Posterior vena cava (tissue), 2 donors: ENCODE measurements at regions of chr1 and their contacts with region 1.

Region 1: GRCh38 chr1:210663730-210664573 is 335.2 kb downstream of the HHAT start:
- DNase-seq: no peak

Region 2: DNA sequence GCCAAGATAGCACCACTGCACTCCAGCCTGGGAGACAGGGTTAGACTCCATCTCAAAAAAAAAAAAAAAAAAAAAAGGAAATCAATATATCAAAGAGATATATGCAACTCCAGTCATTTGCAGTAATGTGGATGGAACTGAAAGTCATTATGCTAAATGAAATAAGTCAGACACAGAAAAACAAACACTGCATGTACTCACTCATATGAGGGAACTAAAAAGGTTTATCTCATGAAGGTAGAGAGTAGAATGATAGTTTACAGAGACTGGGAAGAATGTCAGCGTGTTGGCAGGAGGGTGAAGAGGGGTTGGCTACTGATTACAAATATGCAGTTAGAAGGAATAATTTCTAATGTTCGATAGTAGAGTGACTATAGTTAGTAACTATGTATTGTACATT is 946.1 kb before region 1 on chr1:
- intact Hi-C with region 1: loop called in 1 of 2 experiments (anchors 5 kb)
- DNase-seq: no peak

Region 3: GRCh38 chr1:210144736-210145135 is 519.2 kb before region 1 on chr1:
- intact Hi-C with region 1: no loop called
- DNase-seq: no peak